ENCODE measurements at regions of chr18 and their contacts with region 1.

Region 1: DNA sequence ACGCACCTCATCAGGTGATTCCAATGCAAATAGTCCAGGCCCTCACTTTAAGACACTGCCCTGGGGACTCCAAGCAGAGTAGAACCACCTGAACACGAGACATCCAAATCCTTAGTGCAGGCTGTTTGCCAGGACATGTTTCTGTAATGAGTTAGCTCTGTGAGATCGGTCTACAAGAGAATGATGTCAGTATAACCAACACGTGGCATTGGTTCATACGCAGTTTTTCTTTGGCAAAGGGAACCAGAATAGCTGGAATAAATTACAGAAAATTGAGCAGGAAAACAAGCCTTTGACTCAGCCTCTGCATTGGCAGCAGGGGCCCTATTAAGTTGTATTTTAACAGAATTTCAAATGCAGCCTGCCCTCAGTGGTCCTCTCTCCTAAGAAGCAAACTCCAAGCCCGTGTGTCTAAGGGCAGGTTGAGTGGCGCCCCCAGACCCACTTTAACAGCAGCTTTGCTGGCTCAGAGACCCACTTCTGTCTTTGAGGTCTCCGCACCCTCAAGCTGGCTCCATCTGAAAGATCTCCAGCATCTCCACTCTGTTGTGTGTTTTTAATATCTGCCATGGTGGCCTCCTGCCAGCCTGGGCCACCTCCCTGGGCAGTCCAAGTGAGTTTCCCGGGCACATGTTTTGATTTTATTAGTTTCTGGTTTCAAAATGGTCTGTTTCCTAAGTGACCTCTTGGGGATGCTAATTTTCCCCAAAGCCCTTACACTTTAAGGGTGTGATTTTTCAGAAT is 61.3 kb downstream of the ALPK2 start:
- DNase-seq: peak; percentile 98
- H3K4me3 ChIP-seq: no peak overlapping the region
- H3K27ac ChIP-seq: peak overlapping the region; percentile 74
- H3K4me1 ChIP-seq: peaks cover 22% of the 10 kb centered on the region
- H3K27me3 ChIP-seq: no peaks in the 10 kb centered on the region
- CTCF ChIP-seq: no peak

Region 2: DNA sequence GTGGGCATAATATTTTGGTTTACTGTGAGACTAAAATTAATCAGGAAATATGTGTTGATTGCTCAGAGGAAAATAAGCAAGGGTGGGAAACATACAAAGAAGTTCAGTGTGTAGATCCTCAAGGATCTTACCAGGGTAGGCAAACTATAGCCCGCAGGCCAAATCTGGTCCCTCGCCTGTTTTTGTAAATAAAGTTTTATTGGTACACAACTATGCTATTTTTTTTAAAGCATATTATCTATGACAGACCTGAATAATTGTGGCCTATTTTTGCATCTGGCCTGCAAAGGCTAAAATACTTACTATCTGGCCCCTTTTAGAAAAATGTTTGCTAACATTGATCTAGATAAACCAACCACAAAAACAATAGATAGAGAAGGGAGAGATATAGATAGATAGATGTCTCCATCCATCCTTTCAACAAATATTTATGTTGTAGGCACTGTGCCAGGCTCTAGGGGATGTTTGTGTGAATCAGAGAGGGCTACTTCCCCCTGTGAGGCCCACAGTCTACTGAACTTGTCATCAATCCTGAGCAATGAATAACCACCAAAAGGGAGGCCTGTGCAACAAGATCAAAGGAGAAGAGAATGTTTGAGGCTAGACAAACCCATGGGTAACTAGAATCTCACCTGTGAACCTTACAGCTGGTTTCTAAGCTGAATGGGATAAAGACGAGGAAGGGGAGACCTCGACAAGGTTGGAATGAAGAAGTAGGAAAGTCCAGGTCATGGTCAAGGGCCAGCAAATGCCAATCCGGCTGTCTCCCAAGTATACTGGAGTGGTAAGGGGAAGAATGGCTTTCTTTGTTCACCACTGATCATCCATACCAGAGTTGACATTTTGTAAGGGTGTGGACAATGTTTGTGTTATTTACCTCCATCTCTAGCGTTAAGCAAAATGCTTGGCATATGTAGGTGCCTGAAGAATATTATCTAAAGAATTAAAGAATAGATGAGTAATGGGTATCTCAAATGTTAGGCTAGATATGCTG is 37.7 kb after region 1 on chr18:
- CTCF ChIA-PET with region 1: no interaction called
- dilution Hi-C with region 1: loop called (anchors 5 kb)
- in situ Hi-C with region 1: no loop called
- intact Hi-C with region 1: no loop called
- DNase-seq: peak; percentile 78
- H3K4me3 ChIP-seq: no peak overlapping the region
- H3K27ac ChIP-seq: no peak overlapping the region
- H3K4me1 ChIP-seq: peaks cover 18% of the 10 kb centered on the region
- H3K27me3 ChIP-seq: no peaks in the 10 kb centered on the region
- CTCF ChIP-seq: no peak

Region 3: GRCh38 chr18:59318460-59319050 is 750.9 kb after region 1 on chr18 and contains the start of gene CPLX4:
- CTCF ChIA-PET with region 1: no interaction called
- dilution Hi-C with region 1: no loop called
- in situ Hi-C with region 1: no loop called
- intact Hi-C with region 1: no loop called
- DNase-seq: no peak
- H3K4me3 ChIP-seq: no peak within 1 kb of the TSS
- H3K27ac ChIP-seq: no peak within 1 kb of the TSS
- H3K4me1 ChIP-seq: no peaks in the 10 kb centered on the region
- H3K27me3 ChIP-seq: no peaks in the 10 kb centered on the region
- CTCF ChIP-seq: no peak
- total RNA-seq, gene CPLX4: not detected

Measured in mammary epithelial cell (primary cell).